ENCODE measurements at regions of chr10 and their contacts with region 1.

Region 1: GRCh38 chr10:31318854-31319601 is at the start of gene ZEB1:
- DNase-seq: peak; percentile 89
- ATAC-seq: peak; percentile 82
- H3K4me3 ChIP-seq: peak within 1 kb of the TSS; percentile 97 to 99 (median 97)
- H3K27ac ChIP-seq: peak within 1 kb of the TSS; percentile 94
- H3K4me1 ChIP-seq: peaks cover 28% of the 10 kb centered on the region
- H3K27me3 ChIP-seq: no peaks in the 10 kb centered on the region; a peak in 1 of 5 replicates
- CTCF ChIP-seq: peak; percentile 15; the same call in 1 of the 2 replicates
- EP300 ChIP-seq: no peak
- POLR2A ChIP-seq: peak; percentile 54 to 72
- RAD21 ChIP-seq: peak; percentile 39; the same call in 1 of the 2 replicates
- total RNA-seq, gene ZEB1: 18.0 and 24.7 TPM in 2 replicates

Region 2: GRCh38 chr10:31188802-31189406 is 130.1 kb before region 1 on chr10:
- CTCF ChIA-PET with region 1: no interaction called
- POLR2A ChIA-PET with region 1: no interaction called
- in situ Hi-C with region 1: no loop called
- intact Hi-C with region 1: no loop called
- DNase-seq: no peak
- ATAC-seq: no peak
- H3K4me3 ChIP-seq: no peak overlapping the region
- H3K27ac ChIP-seq: no peak overlapping the region
- H3K4me1 ChIP-seq: no peaks in the 10 kb centered on the region
- H3K27me3 ChIP-seq: peaks cover 0 to 9% of the 10 kb centered on the region in 2 experiments; a peak in 1 of 5 replicates
- CTCF ChIP-seq: no peak
- EP300 ChIP-seq: no peak
- POLR2A ChIP-seq: no peak
- RAD21 ChIP-seq: no peak

Region 3: GRCh38 chr10:31404640-31405039 is 85.6 kb after region 1 on chr10:
- CTCF ChIA-PET with region 1: no interaction called
- POLR2A ChIA-PET with region 1: no interaction called
- in situ Hi-C with region 1: no loop called
- intact Hi-C with region 1: loop called (anchors 5 kb)
- DNase-seq: peak; percentile 54
- ATAC-seq: peak; percentile 82
- H3K4me3 ChIP-seq: no peak overlapping the region
- H3K27ac ChIP-seq: no peak overlapping the region
- H3K4me1 ChIP-seq: peaks cover 22% of the 10 kb centered on the region
- H3K27me3 ChIP-seq: no peaks in the 10 kb centered on the region
- CTCF ChIP-seq: no peak
- EP300 ChIP-seq: no peak
- POLR2A ChIP-seq: no peak
- RAD21 ChIP-seq: no peak

Region 4: DNA sequence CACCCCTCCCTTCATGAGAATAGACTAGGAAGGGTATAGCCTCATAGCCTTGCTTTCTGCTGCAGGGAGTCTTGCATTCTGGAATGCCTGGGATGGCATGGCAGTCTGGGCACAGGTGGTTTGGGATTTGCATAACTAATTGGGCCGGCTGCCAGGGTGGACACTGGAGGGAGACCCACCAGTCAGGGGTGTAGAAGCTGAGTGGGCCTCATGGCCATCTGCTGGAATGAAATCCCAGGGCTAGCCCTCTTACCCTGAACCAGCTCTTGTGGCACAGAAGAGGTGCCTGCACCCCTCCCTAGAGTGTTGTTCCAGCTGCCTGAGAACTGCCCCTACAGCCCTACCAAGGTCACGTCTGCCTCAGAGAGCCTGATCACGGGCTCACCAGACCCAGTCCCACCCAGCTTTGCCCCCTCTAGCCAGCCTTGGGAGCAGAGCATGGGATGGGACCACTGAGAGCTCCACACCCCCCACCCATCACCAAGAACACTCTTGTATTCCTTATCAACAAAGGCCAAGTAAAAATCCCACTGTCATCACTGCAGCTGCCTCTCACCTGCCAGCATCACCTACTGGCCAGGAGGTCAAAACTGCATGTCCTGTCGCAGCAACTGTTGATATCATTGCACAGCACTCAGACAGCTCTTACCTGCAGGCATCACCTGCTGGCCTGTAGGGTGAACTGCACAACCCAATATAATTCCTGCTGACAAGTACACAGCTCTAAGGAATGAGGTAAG is 148.9 kb after region 1 on chr10:
- CTCF ChIA-PET with region 1: no interaction called
- POLR2A ChIA-PET with region 1: no interaction called
- in situ Hi-C with region 1: no loop called
- intact Hi-C with region 1: loop called (anchors 2 kb)
- DNase-seq: peak; percentile 61
- ATAC-seq: peak; percentile 97
- H3K4me3 ChIP-seq: no peak overlapping the region
- H3K27ac ChIP-seq: no peak overlapping the region
- H3K4me1 ChIP-seq: no peaks in the 10 kb centered on the region
- H3K27me3 ChIP-seq: no peaks in the 10 kb centered on the region
- CTCF ChIP-seq: peak; percentile 60
- EP300 ChIP-seq: no peak
- POLR2A ChIP-seq: no peak
- RAD21 ChIP-seq: peak; percentile 56; the same call in 1 of the 2 replicates